ENCODE measurements at regions of chr2 and their contacts with region 1.

Region 1: GRCh38 chr2:38734299-38735058 is 16.7 kb downstream of the SRSF7 start:
- DNase-seq: no peak
- H3K4me3 ChIP-seq: no peak overlapping the region
- H3K4me1 ChIP-seq: no peaks in the 10 kb centered on the region
- H3K27me3 ChIP-seq: no peaks in the 10 kb centered on the region

Region 2: GRCh38 chr2:38602732-38603401 is 131.6 kb before region 1 on chr2 and contains the start of gene HNRNPLL:
- in situ Hi-C with region 1: loop called (anchors 10 kb)
- DNase-seq: peak; percentile 93 to 99
- H3K4me3 ChIP-seq: peak within 1 kb of the TSS; percentile 83
- H3K4me1 ChIP-seq: peaks cover 38% of the 10 kb centered on the region
- H3K27me3 ChIP-seq: no peaks in the 10 kb centered on the region

Measured in HAP-1 (cell line).